ENCODE measurements at regions of chr11 and their contacts with region 1.

Region 1: GRCh38 chr11:130131961-130132850 is 27.4 kb upstream of the ST14 start:
- DNase-seq: peak in 1 of 3 donors; percentile 72
- ATAC-seq: peak; percentile 88
- H3K4me3 ChIP-seq: no peak overlapping the region
- H3K4me1 ChIP-seq: no peaks in the 10 kb centered on the region
- CTCF ChIP-seq: peak; percentile 71

Region 2: DNA sequence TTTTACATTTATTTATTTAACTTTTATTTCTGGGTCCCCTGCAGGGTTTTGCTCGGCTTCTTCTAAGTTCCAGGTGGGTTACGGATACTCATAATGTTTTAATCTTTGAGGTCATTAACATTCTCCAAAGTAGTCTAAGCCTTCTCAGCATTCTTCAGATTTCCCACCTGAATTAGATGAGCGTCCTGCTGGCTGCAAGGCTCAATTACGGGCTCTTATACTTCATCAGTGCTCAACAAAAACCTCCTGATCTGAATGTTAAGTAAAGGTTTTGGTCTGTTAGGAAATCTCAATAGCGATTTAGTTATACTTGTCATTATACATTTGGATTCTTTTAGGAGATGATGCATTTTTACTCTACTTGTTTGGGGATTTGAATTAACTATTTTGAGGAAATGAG is 209.5 kb before region 1 on chr11:
- intact Hi-C with region 1: loop called (anchors 2 to 5 kb)
- DNase-seq: no peak
- ATAC-seq: no peak
- H3K4me3 ChIP-seq: no peak overlapping the region
- H3K4me1 ChIP-seq: no peaks in the 10 kb centered on the region
- CTCF ChIP-seq: no peak

Measured in mucosa of descending colon (tissue), 3 donors.